K562 (cell line): ENCODE measurements at regions of chr9 and their contacts with region 1.

Region 1: GRCh38 chr9:97921959-97922724 is at the start of gene TRMO:
- DNase-seq: peak; percentile 94 to 99 (median 96)
- ATAC-seq: peak; percentile 82
- H3K4me3 ChIP-seq: peak within 1 kb of the TSS; percentile 47
- H3K27ac ChIP-seq: peak within 1 kb of the TSS; percentile 96
- H3K4me1 ChIP-seq: peaks cover 5 to 25% of the 10 kb centered on the region in 2 experiments
- H3K27me3 ChIP-seq: no peaks in the 10 kb centered on the region
- CTCF ChIP-seq: peak; percentile 83 to 95 (median 87)
- EP300 ChIP-seq: peak; percentile 65
- POLR2A ChIP-seq: peak; percentile 98
- RAD21 ChIP-seq: peak; percentile 73 to 79
- polyA plus RNA-seq, gene TRMO: 5.6 to 12.8 TPM

Region 2: DNA sequence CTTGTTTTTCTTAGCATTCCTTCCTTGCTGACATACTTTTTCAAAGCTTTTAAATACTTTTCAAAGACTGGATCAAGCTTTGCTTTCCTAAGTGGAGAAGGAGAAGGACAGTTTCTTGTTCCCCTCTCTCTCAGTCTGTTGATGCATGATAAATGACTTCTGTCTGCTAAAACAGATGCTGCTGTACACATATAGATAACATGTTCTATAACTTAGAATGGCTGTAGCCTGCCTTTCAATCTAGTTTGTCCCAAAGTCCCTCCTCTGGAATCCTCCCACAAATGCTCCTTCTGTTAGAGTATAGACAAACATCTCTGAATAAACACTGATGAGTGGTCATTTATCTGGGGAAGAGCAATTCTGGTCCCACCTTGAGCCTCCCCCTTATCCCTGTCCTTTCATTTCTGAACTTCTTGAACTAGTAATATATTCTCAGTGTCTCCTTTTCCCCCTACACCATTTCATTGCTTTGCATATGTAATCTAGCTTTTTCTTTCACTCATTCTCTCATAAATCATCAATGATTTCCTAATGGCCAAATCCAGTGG is 21.2 kb after region 1 on chr9:
- CTCF ChIA-PET with region 1: interaction called, 5 read pairs
- POLR2A ChIA-PET with region 1: interaction called, 33 read pairs
- in situ Hi-C with region 1: no loop called
- intact Hi-C with region 1: no loop called
- DNase-seq: peak; percentile 73 to 92 (median 81)
- ATAC-seq: peak; percentile 76
- H3K4me3 ChIP-seq: no peak overlapping the region
- H3K27ac ChIP-seq: peak overlapping the region; percentile 79
- H3K4me1 ChIP-seq: peaks cover 34 to 63% of the 10 kb centered on the region in 2 experiments; a peak in 4 of 5 replicates
- H3K27me3 ChIP-seq: no peaks in the 10 kb centered on the region
- CTCF ChIP-seq: no peak
- EP300 ChIP-seq: peak; percentile 99
- POLR2A ChIP-seq: no peak
- RAD21 ChIP-seq: no peak

Region 3: DNA sequence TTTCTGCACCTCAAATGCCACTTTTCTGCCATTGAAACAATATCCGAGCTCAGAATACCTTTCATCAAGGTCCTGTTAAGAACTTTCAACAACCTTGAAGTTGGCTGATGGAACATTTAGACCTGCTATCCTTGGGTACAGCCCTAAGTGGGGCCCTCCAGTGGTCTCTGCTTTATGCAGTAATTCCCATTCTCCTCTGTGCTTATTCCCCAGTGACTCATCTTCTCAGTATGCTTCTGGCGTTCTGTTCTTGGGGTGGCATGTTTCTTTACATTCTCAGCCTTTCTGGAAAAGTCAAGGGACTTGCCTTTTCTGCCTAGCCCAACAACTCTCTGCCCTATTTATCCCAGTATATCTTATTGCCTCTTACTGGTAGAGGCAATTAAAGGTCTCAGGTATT is 68.1 kb after region 1 on chr9:
- CTCF ChIA-PET with region 1: interaction called, 12 read pairs
- POLR2A ChIA-PET with region 1: interaction called, 61 read pairs
- in situ Hi-C with region 1: loop called (anchors 5 kb)
- intact Hi-C with region 1: no loop called
- DNase-seq: peak in 3 of 4 experiments; percentile 28 to 49 (median 44)
- ATAC-seq: peak; percentile 57
- H3K4me3 ChIP-seq: no peak overlapping the region
- H3K27ac ChIP-seq: peak overlapping the region; percentile 31
- H3K4me1 ChIP-seq: peaks cover 18 to 64% of the 10 kb centered on the region in 2 experiments
- H3K27me3 ChIP-seq: no peaks in the 10 kb centered on the region
- CTCF ChIP-seq: peak in 2 of 3 experiments; percentile 25 to 30; a peak in 2 of 6 replicates
- EP300 ChIP-seq: no peak
- POLR2A ChIP-seq: no peak
- RAD21 ChIP-seq: peak in 1 of 2 experiments; percentile 22; a peak in 1 of 4 replicates

Region 4: GRCh38 chr9:98045234-98046179 is 123.4 kb after region 1 on chr9:
- CTCF ChIA-PET with region 1: no interaction called
- POLR2A ChIA-PET with region 1: interaction called, 6 read pairs
- in situ Hi-C with region 1: no loop called
- intact Hi-C with region 1: loop called (anchors 5 kb)
- DNase-seq: peak; percentile 50 to 90 (median 52)
- ATAC-seq: peak; percentile 87
- H3K4me3 ChIP-seq: peak overlapping the region; percentile 55
- H3K27ac ChIP-seq: peak overlapping the region; percentile 90
- H3K4me1 ChIP-seq: peaks cover 12 to 19% of the 10 kb centered on the region in 2 experiments; a peak in 3 of 5 replicates
- H3K27me3 ChIP-seq: no peaks in the 10 kb centered on the region
- CTCF ChIP-seq: peak; percentile 3 to 30 (median 23); a peak in 1 of 6 replicates
- EP300 ChIP-seq: no peak
- POLR2A ChIP-seq: peak; percentile 96
- RAD21 ChIP-seq: no peak

Region 5: DNA sequence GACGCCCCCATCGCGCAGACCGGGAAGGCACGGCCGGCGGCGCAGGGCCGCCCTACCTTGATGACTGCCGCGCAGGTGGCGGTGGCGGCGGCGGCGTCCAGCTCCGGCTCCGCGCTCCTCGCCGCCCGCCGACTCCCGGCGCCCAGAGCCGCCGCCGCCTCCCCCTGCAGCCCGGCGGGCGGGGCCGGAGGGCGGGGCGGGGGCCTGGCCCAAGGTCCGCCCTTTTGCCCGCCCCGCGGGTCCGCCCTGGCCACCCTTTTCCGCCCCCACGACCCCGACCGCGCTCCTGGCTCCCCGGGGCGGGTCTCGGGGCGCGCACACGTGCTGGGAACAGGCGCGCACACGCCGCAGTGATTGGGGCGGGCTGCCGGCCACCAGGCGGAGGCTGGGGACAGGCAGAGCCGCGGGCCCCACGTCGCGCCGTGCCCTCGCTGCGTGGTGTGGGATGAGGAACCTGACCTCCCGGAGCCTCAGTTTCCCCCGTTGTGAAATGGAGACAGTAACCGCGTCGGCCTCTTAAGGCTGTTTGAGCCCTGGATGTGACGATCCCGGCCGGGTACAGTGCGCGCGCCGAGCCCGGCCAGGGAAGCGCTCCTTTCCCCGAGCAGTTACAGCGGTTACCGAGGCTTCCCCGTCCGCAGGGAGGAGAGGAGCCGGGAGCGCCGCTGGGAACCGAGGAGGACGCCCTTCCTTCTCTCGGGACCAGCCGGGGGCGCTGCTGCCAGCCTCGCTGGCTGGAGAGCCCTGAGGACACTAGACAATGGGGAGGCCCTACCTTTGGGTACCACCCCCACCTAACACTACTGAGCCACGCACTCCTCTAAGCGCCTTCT is 270.6 kb after region 1 on chr9 and contains the start of gene CORO2A:
- CTCF ChIA-PET with region 1: no interaction called
- POLR2A ChIA-PET with region 1: no interaction called
- in situ Hi-C with region 1: no loop called
- intact Hi-C with region 1: loop called (anchors 2 kb)
- DNase-seq: peak; percentile 90 to 97 (median 96)
- ATAC-seq: peak; percentile 88
- H3K4me3 ChIP-seq: peak within 1 kb of the TSS; percentile 85
- H3K27ac ChIP-seq: peak within 1 kb of the TSS; percentile 60
- H3K4me1 ChIP-seq: peaks cover 28 to 31% of the 10 kb centered on the region in 2 experiments; a peak in 4 of 5 replicates
- H3K27me3 ChIP-seq: no peaks in the 10 kb centered on the region
- CTCF ChIP-seq: peak; percentile 79 to 84 (median 82)
- EP300 ChIP-seq: no peak
- POLR2A ChIP-seq: peak; percentile 79
- RAD21 ChIP-seq: peak; percentile 63 to 70
- polyA plus RNA-seq, gene CORO2A: 9.5 to 12.2 TPM

Region 6: DNA sequence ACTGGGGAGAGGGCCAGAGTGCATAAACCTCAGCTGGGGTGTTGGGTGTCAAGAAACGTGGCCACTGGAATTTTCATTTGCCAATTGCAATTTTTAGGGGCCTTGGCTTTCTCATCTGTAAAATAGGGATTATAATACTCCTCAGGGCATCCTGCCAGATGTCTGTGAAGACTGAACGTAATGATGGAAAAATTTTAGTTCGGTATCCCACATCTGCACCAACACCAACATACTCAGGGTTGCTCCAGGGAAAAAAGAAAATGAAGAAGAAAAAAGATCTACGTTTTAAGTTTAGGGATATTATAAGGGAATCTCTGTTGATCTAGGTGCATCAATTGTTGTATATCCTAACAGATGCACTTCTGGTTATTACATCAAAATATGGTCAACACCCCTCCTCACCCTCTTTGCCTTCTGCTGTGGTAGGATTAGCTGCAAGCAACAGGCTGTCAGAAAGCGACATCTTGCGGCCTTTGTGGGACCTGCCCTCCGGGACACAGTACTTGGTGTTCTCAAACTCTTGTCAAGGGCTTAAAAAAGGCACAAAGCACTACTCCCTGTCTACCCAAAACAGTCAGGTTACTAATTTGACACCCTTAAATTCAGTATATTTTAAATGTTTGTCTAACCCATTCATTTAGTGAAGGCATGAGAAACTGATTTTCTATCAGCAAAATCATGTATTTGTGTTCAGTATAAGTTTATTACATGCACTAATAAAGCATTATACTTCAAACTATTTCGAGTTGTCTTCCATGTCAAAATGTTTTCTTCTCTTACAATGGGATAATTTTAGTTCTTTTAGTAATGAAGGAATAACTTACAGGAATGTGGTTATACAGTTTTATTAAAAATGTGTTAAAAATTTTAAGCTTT is 341.6 kb after region 1 on chr9:
- CTCF ChIA-PET with region 1: interaction called, 27 read pairs
- POLR2A ChIA-PET with region 1: no interaction called
- in situ Hi-C with region 1: loop called (anchors 25 kb)
- intact Hi-C with region 1: loop called (anchors 1 kb)
- DNase-seq: peak; percentile 76 to 91 (median 79)
- ATAC-seq: peak; percentile 99
- H3K4me3 ChIP-seq: no peak overlapping the region
- H3K27ac ChIP-seq: no peak overlapping the region
- H3K4me1 ChIP-seq: peaks cover 0 to 6% of the 10 kb centered on the region in 2 experiments; a peak in 2 of 5 replicates
- H3K27me3 ChIP-seq: no peaks in the 10 kb centered on the region
- CTCF ChIP-seq: peak; percentile 93 to 95 (median 94)
- EP300 ChIP-seq: no peak
- POLR2A ChIP-seq: no peak
- RAD21 ChIP-seq: peak; percentile 98 to 99